ENCODE measurements at regions of chr4 and their contacts with region 1.

Region 1: GRCh38 chr4:26860157-26860921 is at the start of gene STIM2:
- DNase-seq: peak; percentile 99
- H3K4me3 ChIP-seq: peak within 1 kb of the TSS; percentile 47 to 98 (median 98)
- H3K27ac ChIP-seq: peak within 1 kb of the TSS; percentile 46
- H3K4me1 ChIP-seq: peaks cover 36% of the 10 kb centered on the region
- H3K27me3 ChIP-seq: peaks cover 0 to 7% of the 10 kb centered on the region in 2 experiments
- CTCF ChIP-seq: peak in 1 of 2 donors; percentile 45
- POLR2A ChIP-seq: no peak
- total RNA-seq, gene STIM2: 21.2 and 23.6 TPM in 2 replicates

Region 2: GRCh38 chr4:26319467-26319948 is 540.8 kb before region 1 on chr4:
- CTCF ChIA-PET with region 1: no interaction called
- POLR2A ChIA-PET with region 1: no interaction called
- dilution Hi-C with region 1: no loop called
- intact Hi-C with region 1: loop called (anchors 2 kb)
- DNase-seq: peak; percentile 100
- H3K4me3 ChIP-seq: peak overlapping the region; percentile 76 to 84 (median 79)
- H3K27ac ChIP-seq: peak overlapping the region; percentile 80
- H3K4me1 ChIP-seq: peaks cover 23% of the 10 kb centered on the region
- H3K27me3 ChIP-seq: no peaks in the 10 kb centered on the region
- CTCF ChIP-seq: no peak
- POLR2A ChIP-seq: no peak

Region 3: GRCh38 chr4:26568446-26568994 is 291.8 kb before region 1 on chr4:
- CTCF ChIA-PET with region 1: interaction called, 3 read pairs
- POLR2A ChIA-PET with region 1: no interaction called
- dilution Hi-C with region 1: no loop called
- intact Hi-C with region 1: loop called (anchors 2 kb)
- DNase-seq: peak; percentile 77
- H3K4me3 ChIP-seq: no peak overlapping the region
- H3K27ac ChIP-seq: no peak overlapping the region
- H3K4me1 ChIP-seq: peaks cover 24% of the 10 kb centered on the region
- H3K27me3 ChIP-seq: peaks cover 10% of the 10 kb centered on the region in 2 experiments
- CTCF ChIP-seq: no peak
- POLR2A ChIP-seq: no peak

Region 4: DNA sequence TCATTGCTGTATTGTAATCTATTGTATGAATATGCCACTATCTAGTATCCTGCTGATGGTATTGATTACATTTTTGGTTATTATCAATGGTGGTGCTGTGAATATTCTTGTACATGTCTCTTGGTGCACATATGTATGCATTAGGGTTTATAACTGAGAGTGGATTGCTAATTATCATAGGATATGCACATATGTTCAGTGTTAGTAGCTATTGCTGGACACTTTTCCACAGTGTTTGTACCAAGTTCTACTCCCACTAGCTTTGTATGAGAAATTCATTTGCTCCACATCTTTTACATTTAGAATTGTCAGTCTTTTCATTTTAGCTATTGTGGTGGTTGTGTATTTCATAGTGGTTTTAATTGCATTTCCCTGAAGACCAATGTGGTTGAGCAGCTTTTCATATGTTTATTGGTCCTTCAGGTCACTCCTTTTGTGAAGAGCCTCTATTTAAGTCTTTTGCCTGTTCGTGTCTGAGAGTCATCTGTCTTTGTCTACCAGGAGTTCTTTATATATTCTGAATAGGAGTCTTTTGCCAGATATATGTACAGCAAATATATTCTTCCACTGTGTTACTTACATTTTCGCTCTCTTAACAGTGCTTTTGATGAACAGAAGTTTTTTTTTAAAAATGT is 189.3 kb before region 1 on chr4:
- CTCF ChIA-PET with region 1: no interaction called
- POLR2A ChIA-PET with region 1: no interaction called
- dilution Hi-C with region 1: no loop called
- intact Hi-C with region 1: no loop called
- DNase-seq: no peak
- H3K4me3 ChIP-seq: no peak overlapping the region
- H3K27ac ChIP-seq: no peak overlapping the region
- H3K4me1 ChIP-seq: no peaks in the 10 kb centered on the region
- H3K27me3 ChIP-seq: no peaks in the 10 kb centered on the region
- CTCF ChIP-seq: no peak
- POLR2A ChIP-seq: no peak

Region 5: GRCh38 chr4:26724534-26724933 is 135.8 kb before region 1 on chr4:
- CTCF ChIA-PET with region 1: no interaction called
- POLR2A ChIA-PET with region 1: no interaction called
- dilution Hi-C with region 1: no loop called
- intact Hi-C with region 1: no loop called
- DNase-seq: no peak
- H3K4me3 ChIP-seq: no peak overlapping the region
- H3K27ac ChIP-seq: no peak overlapping the region
- H3K4me1 ChIP-seq: no peaks in the 10 kb centered on the region
- H3K27me3 ChIP-seq: no peaks in the 10 kb centered on the region
- CTCF ChIP-seq: no peak
- POLR2A ChIP-seq: no peak

Region 6: GRCh38 chr4:26787461-26788340 is 72.6 kb before region 1 on chr4:
- CTCF ChIA-PET with region 1: interaction called, 6 read pairs
- POLR2A ChIA-PET with region 1: no interaction called
- dilution Hi-C with region 1: no loop called
- intact Hi-C with region 1: loop called (anchors 1 kb)
- DNase-seq: peak; percentile 52
- H3K4me3 ChIP-seq: no peak overlapping the region
- H3K27ac ChIP-seq: peak overlapping the region; percentile 39
- H3K4me1 ChIP-seq: peaks cover 29% of the 10 kb centered on the region
- H3K27me3 ChIP-seq: no peaks in the 10 kb centered on the region
- CTCF ChIP-seq: peak; percentile 8 to 29
- POLR2A ChIP-seq: no peak

Region 7: DNA sequence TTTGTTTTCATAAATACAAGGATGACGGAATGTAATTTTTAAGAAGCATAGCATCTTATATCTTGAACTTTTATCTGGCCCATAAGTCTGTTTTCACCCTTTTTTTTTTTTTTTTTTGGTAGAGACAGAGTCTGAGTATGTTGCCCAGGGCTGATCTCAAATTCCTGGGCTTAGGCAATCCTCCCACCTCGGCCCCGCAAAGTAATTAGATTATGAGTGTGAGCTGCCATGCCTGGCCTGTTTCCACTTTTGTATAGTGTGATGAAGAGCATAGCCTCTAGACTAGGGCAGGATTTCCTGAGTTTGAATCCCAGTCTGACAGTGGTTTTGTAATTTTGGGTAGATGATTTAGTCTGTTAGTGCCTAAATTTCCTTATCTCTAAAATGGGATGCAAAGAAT is 11.3 kb after region 1 on chr4:
- CTCF ChIA-PET with region 1: interaction called, 10 read pairs
- POLR2A ChIA-PET with region 1: interaction called, 9 read pairs
- dilution Hi-C with region 1: no loop called
- intact Hi-C with region 1: loop called (anchors 1 kb)
- DNase-seq: no peak
- H3K4me3 ChIP-seq: no peak overlapping the region
- H3K27ac ChIP-seq: no peak overlapping the region
- H3K4me1 ChIP-seq: peaks cover 5% of the 10 kb centered on the region
- H3K27me3 ChIP-seq: no peaks in the 10 kb centered on the region
- CTCF ChIP-seq: no peak
- POLR2A ChIP-seq: no peak

Region 8: DNA sequence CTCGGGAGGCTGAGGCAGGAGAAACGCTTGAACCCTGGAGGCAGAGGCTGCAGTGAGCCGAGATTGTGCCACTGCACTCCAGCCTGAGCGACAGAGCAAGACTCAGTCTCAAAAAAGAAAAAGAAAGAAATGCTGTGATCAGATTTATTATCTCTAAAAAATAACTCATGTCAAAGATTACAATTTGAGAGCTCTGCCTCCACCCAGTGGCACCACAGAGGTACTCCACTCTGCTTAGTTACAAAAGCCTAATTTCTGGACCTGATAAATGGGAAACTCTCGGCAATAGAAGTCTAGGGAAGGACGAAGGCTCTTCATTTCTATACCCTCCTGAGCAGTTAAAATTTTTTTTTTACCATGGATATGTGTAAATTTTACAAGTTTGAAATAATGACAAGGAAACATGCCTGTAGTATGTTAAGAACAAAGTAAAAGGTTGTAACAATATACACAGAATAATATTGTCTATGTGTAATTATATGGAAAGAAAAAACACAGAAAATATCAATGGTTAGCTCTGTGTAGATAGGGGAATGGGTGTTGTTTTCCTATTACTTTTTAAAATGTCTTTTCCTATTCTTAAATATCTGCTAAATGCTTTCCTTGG is 150.1 kb after region 1 on chr4:
- CTCF ChIA-PET with region 1: interaction called, 16 read pairs
- POLR2A ChIA-PET with region 1: no interaction called
- dilution Hi-C with region 1: no loop called
- intact Hi-C with region 1: loop called (anchors 1 kb)
- DNase-seq: peak; percentile 77
- H3K4me3 ChIP-seq: no peak overlapping the region
- H3K27ac ChIP-seq: no peak overlapping the region
- H3K4me1 ChIP-seq: peaks cover 10% of the 10 kb centered on the region
- H3K27me3 ChIP-seq: no peaks in the 10 kb centered on the region
- CTCF ChIP-seq: peak; percentile 62 to 68
- POLR2A ChIP-seq: no peak

Measured in endothelial cell of umbilical vein (primary cell).